ENCODE measurements at regions of chr11 and their contacts with region 1.

Region 1: DNA sequence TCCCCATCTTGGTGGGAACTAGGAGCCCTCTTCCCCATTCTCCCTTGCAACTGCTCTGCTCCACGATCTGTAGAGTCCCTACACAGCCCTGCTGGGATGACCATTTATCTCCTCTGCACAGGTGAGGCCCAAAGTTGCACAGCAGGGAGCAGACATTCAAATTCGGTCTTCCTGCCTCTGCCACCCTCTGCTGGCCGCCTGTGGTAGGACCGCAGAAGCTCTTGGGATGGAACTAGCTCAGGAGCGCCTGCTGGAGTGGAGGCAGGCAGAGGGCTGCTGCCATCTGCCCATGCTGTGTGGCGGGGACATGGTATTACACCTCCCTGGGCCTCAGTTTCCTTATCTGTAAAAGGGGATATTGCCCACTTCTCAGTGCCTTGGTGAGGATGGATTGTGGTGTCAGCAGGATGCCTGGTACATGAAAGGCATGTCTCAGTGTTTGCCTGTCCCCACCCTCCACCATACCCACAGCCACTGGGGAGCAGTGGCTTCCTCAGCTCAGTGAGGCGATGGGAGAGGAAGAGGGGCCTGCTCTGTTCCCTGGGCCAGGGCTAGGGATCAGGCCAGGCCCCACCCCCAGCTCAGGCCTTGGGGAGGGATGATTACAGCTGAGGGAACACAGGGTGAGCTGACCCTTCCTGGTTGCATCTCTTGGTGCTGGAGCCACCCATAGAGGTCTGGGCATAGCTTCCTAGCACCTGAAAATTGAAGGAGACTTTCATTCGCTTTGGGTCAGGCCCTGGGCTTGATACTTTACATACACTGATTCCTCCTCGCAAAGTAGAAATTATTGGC is 11.3 kb upstream of the OMP start:
- DNase-seq: peak; percentile 91
- CTCF ChIP-seq: peak; percentile 98

Region 2: DNA sequence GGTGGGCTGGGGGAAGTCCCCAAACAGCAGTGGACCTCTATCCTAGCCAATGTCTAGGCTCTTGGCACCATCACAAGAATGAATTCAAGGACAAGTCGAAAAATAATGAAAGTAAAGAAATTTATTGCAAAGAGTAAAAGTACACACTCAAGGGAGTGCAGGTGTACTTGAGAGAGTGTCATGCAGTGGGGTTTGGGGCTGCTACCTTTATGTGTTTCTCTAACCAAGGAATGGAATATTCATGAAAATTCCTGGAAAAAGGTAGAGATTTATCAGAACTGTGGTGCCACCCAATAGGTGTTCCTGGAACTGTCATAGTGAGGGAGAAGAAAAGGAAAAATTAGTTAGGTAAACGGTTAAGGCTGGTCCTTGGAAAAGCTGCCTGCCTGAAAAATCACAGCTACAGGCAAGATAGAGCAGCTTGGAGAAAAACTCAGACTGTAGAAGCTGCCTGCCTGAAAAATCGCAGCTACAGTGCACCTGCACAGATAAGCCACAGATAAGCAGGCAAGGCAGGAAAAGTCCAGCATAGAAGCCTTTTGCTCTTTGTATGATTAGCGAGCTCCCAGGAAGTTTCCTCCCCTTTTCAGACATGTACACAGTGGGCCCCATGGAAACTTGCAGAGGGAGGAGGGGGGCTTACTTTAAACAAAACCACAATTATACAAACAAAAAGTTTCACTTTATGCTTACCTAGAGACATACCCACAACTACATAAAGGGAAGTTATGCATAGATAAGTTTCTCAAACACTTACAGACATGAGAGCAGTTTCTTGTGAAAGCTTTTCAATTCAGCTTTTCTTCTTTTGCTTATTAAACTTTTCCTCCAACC is 128.5 kb before region 1 on chr11:
- CTCF ChIA-PET with region 1: no interaction called
- POLR2A ChIA-PET with region 1: no interaction called
- DNase-seq: peak; percentile 50
- CTCF ChIP-seq: no peak

Region 3: GRCh38 chr11:77003954-77004353 is 87.4 kb before region 1 on chr11:
- CTCF ChIA-PET with region 1: no interaction called
- POLR2A ChIA-PET with region 1: no interaction called
- DNase-seq: no peak
- CTCF ChIP-seq: no peak

Region 4: DNA sequence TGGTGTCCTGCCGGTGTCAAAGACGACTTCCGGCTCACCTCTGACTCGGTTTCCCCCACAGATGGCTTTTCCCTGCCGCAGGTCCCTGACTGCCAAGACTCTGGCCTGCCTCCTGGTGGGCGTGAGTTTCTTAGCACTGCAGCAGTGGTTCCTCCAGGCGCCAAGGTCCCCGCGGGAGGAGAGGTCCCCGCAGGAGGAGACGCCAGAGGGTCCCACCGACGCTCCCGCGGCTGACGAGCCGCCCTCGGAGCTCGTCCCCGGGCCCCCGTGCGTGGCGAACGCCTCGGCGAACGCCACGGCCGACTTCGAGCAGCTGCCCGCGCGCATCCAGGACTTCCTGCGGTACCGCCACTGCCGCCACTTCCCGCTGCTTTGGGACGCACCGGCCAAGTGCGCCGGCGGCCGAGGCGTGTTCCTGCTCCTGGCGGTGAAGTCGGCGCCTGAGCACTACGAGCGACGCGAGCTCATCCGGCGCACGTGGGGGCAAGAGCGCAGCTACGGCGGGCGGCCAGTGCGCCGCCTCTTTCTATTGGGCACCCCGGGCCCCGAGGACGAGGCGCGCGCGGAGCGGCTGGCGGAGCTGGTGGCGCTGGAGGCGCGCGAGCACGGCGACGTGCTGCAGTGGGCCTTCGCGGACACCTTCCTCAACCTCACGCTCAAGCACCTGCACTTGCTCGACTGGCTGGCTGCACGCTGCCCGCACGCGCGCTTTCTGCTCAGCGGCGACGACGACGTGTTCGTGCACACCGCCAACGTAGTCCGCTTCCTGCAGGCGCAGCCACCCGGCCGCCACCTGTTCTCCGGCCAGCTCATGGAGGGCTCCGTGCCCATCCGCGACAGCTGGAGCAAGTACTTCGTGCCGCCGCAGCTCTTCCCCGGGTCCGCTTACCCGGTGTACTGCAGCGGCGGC is 51.6 kb before region 1 on chr11:
- CTCF ChIA-PET with region 1: interaction called, 27 read pairs
- POLR2A ChIA-PET with region 1: no interaction called
- DNase-seq: peak; percentile 49
- CTCF ChIP-seq: peak; percentile 58

Region 5: GRCh38 chr11:77053217-77054015 is 37.9 kb before region 1 on chr11:
- CTCF ChIA-PET with region 1: interaction called, 85 read pairs
- POLR2A ChIA-PET with region 1: no interaction called
- DNase-seq: no peak
- CTCF ChIP-seq: no peak

Region 6: DNA sequence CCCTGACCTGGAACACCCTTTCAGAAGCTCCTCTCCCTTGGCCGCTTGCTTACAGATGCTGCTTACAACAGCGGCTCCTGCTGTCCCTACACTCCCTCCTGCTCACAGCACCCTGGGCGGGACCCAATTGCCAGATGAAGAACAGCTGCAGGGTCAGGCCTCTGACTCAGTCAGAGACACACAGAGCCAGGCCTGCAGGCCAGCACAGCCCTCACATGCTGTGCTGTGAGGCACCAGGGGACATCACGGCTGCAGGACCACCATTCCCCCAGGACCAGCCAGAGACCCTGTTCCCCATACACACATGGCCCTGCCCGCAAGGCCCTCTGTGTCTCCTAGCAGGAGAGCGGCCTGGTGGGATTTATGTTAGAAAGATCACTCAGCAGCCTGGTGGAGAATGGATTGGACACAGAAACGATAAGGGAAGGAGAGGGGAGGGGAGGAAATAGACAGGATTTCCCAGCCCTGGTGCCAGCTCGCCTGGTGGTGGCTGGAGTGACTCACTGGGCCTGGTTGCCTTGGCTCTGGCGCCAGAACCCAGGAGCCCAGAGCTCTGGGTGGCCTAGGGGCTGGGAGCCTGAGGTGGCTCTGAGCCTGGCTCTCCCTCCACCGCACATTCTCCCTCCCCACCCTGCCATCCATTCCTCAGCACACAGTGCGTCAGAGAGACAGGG is 17.9 kb before region 1 on chr11:
- CTCF ChIA-PET with region 1: interaction called, 19 read pairs
- POLR2A ChIA-PET with region 1: no interaction called
- DNase-seq: no peak
- CTCF ChIP-seq: no peak

Region 7: GRCh38 chr11:77113382-77114088 is 22.2 kb after region 1 on chr11:
- CTCF ChIA-PET with region 1: interaction called, 41 read pairs
- POLR2A ChIA-PET with region 1: no interaction called
- DNase-seq: peak; percentile 53
- CTCF ChIP-seq: no peak

Measured in GM10248 (cell line).